ENCODE measurements at regions of chr2 and their contacts with region 1.

Region 1: DNA sequence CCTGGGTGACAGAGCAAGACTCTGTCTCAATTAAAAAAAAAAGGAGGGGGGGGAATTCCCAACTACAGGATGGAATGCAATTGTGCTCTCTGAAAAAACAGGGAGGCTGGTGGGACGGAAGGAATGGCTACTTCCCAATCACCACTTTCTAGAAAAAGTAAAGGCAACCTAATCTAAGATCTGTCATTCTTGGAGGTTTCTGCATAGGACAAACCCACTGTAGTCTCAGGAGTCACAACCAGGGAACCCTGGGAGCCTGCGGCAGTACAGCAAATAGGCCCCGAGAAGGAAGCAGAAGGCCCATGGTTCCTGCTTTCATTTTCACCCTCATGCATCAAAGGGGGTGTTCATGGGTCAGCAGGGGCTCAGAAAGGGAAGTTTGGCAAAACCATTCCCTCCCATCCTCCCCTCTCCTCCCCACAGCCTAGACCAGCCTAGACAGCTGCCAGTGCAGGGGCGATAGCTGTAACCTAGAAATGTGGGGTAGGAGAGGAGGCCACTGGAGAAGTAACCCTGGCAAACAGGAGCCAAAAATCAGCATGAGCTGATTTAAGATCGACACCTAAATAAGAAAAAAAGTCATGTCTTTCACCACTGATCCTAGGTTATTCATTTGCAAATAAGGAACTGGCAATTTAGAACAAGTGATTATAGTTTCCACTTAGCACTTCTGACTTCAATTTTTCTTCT is 48.0 kb downstream of the TRABD2A start:
- DNase-seq: peak; percentile 52
- H3K4me3 Mint-ChIP-seq: peak overlapping the region; percentile 43
- H3K27ac Mint-ChIP-seq: peak overlapping the region; percentile 87
- H3K4me1 Mint-ChIP-seq: peaks cover 33% of the 10 kb centered on the region
- H3K27me3 Mint-ChIP-seq: no peaks in the 10 kb centered on the region

Region 2: DNA sequence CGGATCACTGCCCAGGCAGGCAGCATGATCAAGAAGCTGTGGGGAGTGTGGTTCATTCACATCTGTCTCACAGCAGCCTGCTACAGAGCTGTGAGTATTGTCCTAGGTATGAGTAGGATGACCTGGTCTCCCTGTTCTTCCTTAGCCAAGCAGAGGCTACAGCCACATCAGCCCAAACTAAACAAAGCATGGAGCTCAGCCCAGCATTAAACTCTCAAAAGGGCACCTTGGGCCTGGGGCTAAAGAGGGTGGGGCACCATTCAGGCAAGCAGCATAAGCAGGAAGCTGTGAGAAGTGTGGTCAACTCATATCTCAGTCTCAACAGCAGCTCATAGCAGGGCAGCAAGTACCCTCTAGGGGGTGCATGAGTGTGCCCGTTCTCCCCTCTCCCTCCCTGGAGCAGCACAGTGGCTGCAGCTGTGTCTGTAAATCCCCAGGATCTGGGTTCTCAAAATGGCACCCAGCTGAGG is 91.6 kb before region 1 on chr2:
- CTCF ChIA-PET with region 1: interaction called, 4 read pairs
- intact Hi-C with region 1: loop called (anchors 2 kb)
- DNase-seq: peak; percentile 79
- H3K4me3 Mint-ChIP-seq: no peak overlapping the region
- H3K27ac Mint-ChIP-seq: no peak overlapping the region
- H3K4me1 Mint-ChIP-seq: peaks cover 24% of the 10 kb centered on the region
- H3K27me3 Mint-ChIP-seq: no peaks in the 10 kb centered on the region

Region 3: GRCh38 chr2:84817239-84817655 is 15.7 kb before region 1 on chr2:
- CTCF ChIA-PET with region 1: interaction called, 3 read pairs
- intact Hi-C with region 1: loop called (anchors 1 kb)
- DNase-seq: peak; percentile 35
- H3K4me3 Mint-ChIP-seq: no peak overlapping the region
- H3K27ac Mint-ChIP-seq: peak overlapping the region; percentile 57
- H3K4me1 Mint-ChIP-seq: peaks cover 41% of the 10 kb centered on the region
- H3K27me3 Mint-ChIP-seq: no peaks in the 10 kb centered on the region

Region 4: DNA sequence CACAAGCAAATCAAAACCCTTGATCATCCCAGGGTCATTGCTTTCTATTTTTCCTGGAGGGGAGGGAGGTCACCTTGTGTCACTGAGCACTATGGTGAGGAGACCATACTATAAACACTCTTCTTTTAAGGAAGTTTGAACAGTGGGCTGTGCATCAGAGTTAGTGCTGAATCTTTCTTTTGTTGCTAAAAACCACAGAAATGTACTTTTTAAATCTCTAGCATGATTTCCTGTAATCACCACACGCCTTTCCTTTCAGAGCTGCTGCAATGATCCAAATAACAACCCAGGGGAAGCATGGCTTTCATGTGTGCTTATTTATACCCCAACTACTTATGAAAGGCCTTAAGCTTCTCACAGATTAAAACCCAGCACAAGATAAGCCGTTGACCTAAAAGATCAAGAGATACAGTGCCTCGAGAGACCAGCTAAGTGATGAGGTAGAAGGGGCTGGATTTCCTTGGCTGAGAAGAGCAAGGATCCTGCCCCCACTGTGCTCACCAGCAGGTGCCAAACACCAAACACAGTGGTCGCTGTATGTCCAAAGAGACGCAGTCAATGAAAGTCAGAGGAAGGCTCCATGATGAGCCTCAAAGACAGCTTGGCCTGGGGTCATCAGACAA is 13.2 kb after region 1 on chr2:
- CTCF ChIA-PET with region 1: interaction called, 7 read pairs
- intact Hi-C with region 1: loop called (anchors 2 kb)
- DNase-seq: peak; percentile 66
- H3K4me3 Mint-ChIP-seq: peak overlapping the region; percentile 78
- H3K27ac Mint-ChIP-seq: peak overlapping the region; percentile 99
- H3K4me1 Mint-ChIP-seq: peaks cover 95% of the 10 kb centered on the region
- H3K27me3 Mint-ChIP-seq: no peaks in the 10 kb centered on the region

Region 5: GRCh38 chr2:84905181-84906107 is 72.5 kb after region 1 on chr2 and contains the start of gene TMSB10:
- CTCF ChIA-PET with region 1: no interaction called
- intact Hi-C with region 1: no loop called
- DNase-seq: peak; percentile 82
- H3K4me3 Mint-ChIP-seq: peak within 1 kb of the TSS; percentile 86
- H3K27ac Mint-ChIP-seq: peak within 1 kb of the TSS; percentile 92
- H3K4me1 Mint-ChIP-seq: peaks cover 43% of the 10 kb centered on the region
- H3K27me3 Mint-ChIP-seq: no peaks in the 10 kb centered on the region
- total RNA-seq, gene TMSB10: 1,772 to 1,864 TPM